GM13976 (cell line): ENCODE measurements at regions of chr3 and their contacts with region 1.

Region 1: GRCh38 chr3:58532794-58533220 is 4.2 kb downstream of the ACOX2 start:
- DNase-seq: peak; percentile 91
- CTCF ChIP-seq: peak; percentile 92

Region 2: GRCh38 chr3:58324391-58325390 is 208.1 kb before region 1 on chr3:
- in situ Hi-C with region 1: loop called (anchors 10 kb)
- DNase-seq: peak; percentile 34
- CTCF ChIP-seq: no peak

Region 3: GRCh38 chr3:58754074-58754473 is 221.3 kb after region 1 on chr3:
- in situ Hi-C with region 1: no loop called
- DNase-seq: no peak
- CTCF ChIP-seq: no peak